Right ventricle myocardium inferior (tissue), 1 donor: ENCODE measurements at regions of chr17 and their contacts with region 1.

Region 1: GRCh38 chr17:20226814-20227482 is 217.8 kb downstream of the SPECC1 start:
- DNase-seq: peak; percentile 86
- ATAC-seq: peak; percentile 96

Region 2: GRCh38 chr17:19992803-19993713 is 233.9 kb before region 1 on chr17:
- intact Hi-C with region 1: loop called (anchors 10 kb)
- DNase-seq: peak; percentile 94
- ATAC-seq: peak; percentile 98

Region 3: GRCh38 chr17:20121359-20122253 is 105.3 kb before region 1 on chr17:
- intact Hi-C with region 1: loop called (anchors 5 kb)
- DNase-seq: no peak
- ATAC-seq: peak; percentile 61

Region 4: GRCh38 chr17:20315821-20316220 is 88.9 kb after region 1 on chr17:
- intact Hi-C with region 1: loop called (anchors 5 kb)
- DNase-seq: no peak
- ATAC-seq: no peak

Region 5: GRCh38 chr17:20852239-20852989 is 625.5 kb after region 1 on chr17:
- intact Hi-C with region 1: loop called (anchors 10 kb)
- DNase-seq: peak; percentile 69
- ATAC-seq: no peak